K562 (cell line): ENCODE measurements at regions of chr1 and their contacts with region 1.

Region 1: DNA sequence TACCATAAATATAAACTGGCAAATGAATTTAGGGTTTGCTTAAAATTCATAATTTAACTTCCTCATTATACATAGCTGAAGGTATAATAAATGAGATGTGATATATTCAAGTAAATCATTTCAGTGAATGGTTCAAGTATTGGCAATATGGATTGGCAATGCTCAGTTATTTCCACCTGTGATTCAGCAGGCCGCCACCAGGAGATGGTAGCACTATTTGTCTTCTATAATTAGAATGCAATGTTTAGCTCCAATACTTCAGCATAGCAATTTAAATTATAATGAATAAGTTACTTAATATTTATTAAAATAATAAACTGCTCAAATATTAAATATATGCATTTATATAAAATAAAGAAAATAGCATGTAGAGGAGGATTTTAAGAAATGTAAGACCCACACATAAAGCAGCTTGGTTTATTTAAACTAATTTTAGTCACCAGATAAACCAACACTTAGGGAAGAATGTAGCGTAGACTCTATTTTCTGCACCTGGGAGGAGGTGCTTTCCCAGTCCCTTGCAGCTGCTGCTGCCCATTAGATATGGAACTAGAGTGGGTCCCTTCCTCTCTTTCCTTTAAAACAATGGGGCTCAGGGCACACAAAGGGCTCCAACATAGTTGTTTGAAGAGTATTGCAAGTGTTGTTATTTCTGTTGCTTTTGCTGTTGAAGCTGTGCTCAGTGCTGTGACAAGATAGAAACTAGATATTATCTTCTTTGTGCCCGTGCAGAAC is 62.1 kb downstream of the PLPPR4 start:
- DNase-seq: peak in 1 of 4 experiments; percentile 9
- ATAC-seq: 0 out of 3 replicates have a peak, but pooled peaks have one; percentile 42
- H3K4me3 ChIP-seq: no peak overlapping the region
- H3K27ac ChIP-seq: no peak overlapping the region
- H3K4me1 ChIP-seq: no peaks in the 10 kb centered on the region
- H3K27me3 ChIP-seq: no peaks in the 10 kb centered on the region
- CTCF ChIP-seq: peak; percentile 23 to 58 (median 24); a peak in 4 of 6 replicates
- EP300 ChIP-seq: no peak
- POLR2A ChIP-seq: no peak
- RAD21 ChIP-seq: peak; percentile 58 to 59

Region 2: GRCh38 chr1:99348397-99349132 is 22.2 kb after region 1 on chr1:
- CTCF ChIA-PET with region 1: no interaction called
- POLR2A ChIA-PET with region 1: no interaction called
- in situ Hi-C with region 1: no loop called
- intact Hi-C with region 1: no loop called
- DNase-seq: no peak
- ATAC-seq: no peak
- H3K4me3 ChIP-seq: no peak overlapping the region
- H3K27ac ChIP-seq: no peak overlapping the region
- H3K4me1 ChIP-seq: no peaks in the 10 kb centered on the region
- H3K27me3 ChIP-seq: no peaks in the 10 kb centered on the region
- CTCF ChIP-seq: no peak
- EP300 ChIP-seq: no peak
- POLR2A ChIP-seq: no peak
- RAD21 ChIP-seq: no peak

Region 3: DNA sequence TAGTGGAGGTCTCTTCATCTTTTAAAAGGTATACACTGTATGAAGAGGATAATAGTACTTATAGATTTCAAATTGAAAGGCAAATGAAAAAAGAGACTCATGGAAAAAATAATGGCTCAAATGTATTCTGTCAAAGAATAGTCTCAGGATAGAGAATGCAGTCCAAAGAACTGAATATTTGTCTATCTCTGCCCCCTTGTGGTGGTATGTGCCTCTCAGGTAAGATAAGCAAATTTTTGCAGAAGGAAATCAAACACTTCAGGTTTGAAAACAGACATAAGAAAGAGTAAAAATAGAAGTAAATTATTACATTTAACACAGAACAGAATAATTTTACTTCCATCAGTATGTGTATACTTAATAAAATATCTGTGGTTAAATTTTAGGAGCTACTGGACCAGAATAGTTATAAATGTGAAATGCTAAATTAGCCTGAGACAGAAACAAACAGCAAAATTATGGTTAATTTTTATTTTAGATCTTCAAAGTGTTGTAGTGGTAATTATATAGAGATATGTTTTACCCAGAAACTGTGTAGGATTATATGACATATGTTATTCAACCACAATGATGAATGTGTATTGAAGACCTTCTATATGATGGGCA is 155.1 kb after region 1 on chr1:
- CTCF ChIA-PET with region 1: no interaction called
- POLR2A ChIA-PET with region 1: no interaction called
- in situ Hi-C with region 1: no loop called
- intact Hi-C with region 1: loop called (anchors 1 kb)
- DNase-seq: peak; percentile 35 to 69 (median 38)
- ATAC-seq: peak; percentile 89
- H3K4me3 ChIP-seq: no peak overlapping the region
- H3K27ac ChIP-seq: no peak overlapping the region
- H3K4me1 ChIP-seq: no peaks in the 10 kb centered on the region
- H3K27me3 ChIP-seq: no peaks in the 10 kb centered on the region
- CTCF ChIP-seq: peak; percentile 48 to 79 (median 50); a peak in 4 of 6 replicates
- EP300 ChIP-seq: no peak
- POLR2A ChIP-seq: no peak
- RAD21 ChIP-seq: peak; percentile 89

Region 4: GRCh38 chr1:99707535-99708142 is 381.3 kb after region 1 on chr1:
- CTCF ChIA-PET with region 1: no interaction called
- POLR2A ChIA-PET with region 1: no interaction called
- in situ Hi-C with region 1: no loop called
- intact Hi-C with region 1: loop called (anchors 1 kb)
- DNase-seq: peak; percentile 56 to 74 (median 58)
- ATAC-seq: peak; percentile 89
- H3K4me3 ChIP-seq: no peak overlapping the region
- H3K27ac ChIP-seq: no peak overlapping the region
- H3K4me1 ChIP-seq: peaks cover 2 to 6% of the 10 kb centered on the region in 2 experiments; a peak in 4 of 5 replicates
- H3K27me3 ChIP-seq: no peaks in the 10 kb centered on the region
- CTCF ChIP-seq: peak; percentile 64 to 86 (median 86)
- EP300 ChIP-seq: no peak
- POLR2A ChIP-seq: no peak
- RAD21 ChIP-seq: peak; percentile 83 to 87